Endothelial cell of umbilical vein (primary cell): ENCODE measurements at regions of chr1 and their contacts with region 1.

Region 1: DNA sequence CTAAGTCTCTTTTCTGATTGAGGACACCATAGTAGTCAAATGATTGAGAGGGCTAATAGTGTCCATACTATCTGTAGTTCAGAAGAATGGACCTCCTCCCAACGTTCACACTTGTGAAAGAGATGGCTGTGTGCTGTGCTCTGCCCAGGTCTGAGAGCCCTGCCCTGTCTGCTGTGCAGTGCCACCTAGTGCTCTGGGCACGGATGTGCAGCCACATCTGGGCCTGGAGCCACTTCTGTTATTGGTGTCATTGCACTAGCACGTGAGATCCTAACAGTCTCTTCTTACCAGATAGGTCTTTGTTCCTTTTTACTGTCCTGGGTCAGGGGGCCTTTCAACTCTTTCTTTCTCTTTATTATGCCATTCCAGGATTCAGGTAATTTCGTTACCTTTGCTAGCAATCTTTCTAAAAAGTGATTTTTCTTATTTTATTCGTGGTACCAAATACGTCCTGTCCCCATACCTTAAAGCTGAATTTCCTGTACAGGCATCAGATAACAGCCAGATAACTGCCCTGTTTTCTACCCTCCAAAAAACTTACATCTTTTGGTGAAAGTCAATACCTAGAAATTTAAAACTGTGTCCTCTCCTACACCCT is 21.7 kb downstream of the INTS3 start:
- DNase-seq: peak; percentile 88
- H3K4me3 ChIP-seq: no peak overlapping the region
- H3K27ac ChIP-seq: peak overlapping the region; percentile 36
- H3K4me1 ChIP-seq: peaks cover 37% of the 10 kb centered on the region
- H3K27me3 ChIP-seq: no peaks in the 10 kb centered on the region
- CTCF ChIP-seq: peak; percentile 94 to 96
- POLR2A ChIP-seq: no peak

Region 2: GRCh38 chr1:153670859-153671627 is 78.5 kb before region 1 on chr1 and contains the start of gene ILF2:
- CTCF ChIA-PET with region 1: interaction called, 12 read pairs
- POLR2A ChIA-PET with region 1: no interaction called
- dilution Hi-C with region 1: no loop called
- intact Hi-C with region 1: no loop called
- DNase-seq: peak; percentile 100
- H3K4me3 ChIP-seq: peak within 1 kb of the TSS; percentile 69 to 98 (median 92)
- H3K27ac ChIP-seq: peak within 1 kb of the TSS; percentile 85
- H3K4me1 ChIP-seq: peaks cover 11% of the 10 kb centered on the region
- H3K27me3 ChIP-seq: no peaks in the 10 kb centered on the region
- CTCF ChIP-seq: no peak
- POLR2A ChIP-seq: peak; percentile 95
- total RNA-seq, gene ILF2: 271 TPM in 2 replicates

Region 3: GRCh38 chr1:153698020-153698931 is 51.2 kb before region 1 on chr1:
- CTCF ChIA-PET with region 1: interaction called, 20 read pairs
- POLR2A ChIA-PET with region 1: interaction called, 3 read pairs
- dilution Hi-C with region 1: no loop called
- intact Hi-C with region 1: loop called (anchors 1 kb)
- DNase-seq: peak; percentile 96
- H3K4me3 ChIP-seq: no peak overlapping the region
- H3K27ac ChIP-seq: peak overlapping the region; percentile 90
- H3K4me1 ChIP-seq: peaks cover 26% of the 10 kb centered on the region
- H3K27me3 ChIP-seq: no peaks in the 10 kb centered on the region
- CTCF ChIP-seq: no peak
- POLR2A ChIP-seq: no peak

Region 4: DNA sequence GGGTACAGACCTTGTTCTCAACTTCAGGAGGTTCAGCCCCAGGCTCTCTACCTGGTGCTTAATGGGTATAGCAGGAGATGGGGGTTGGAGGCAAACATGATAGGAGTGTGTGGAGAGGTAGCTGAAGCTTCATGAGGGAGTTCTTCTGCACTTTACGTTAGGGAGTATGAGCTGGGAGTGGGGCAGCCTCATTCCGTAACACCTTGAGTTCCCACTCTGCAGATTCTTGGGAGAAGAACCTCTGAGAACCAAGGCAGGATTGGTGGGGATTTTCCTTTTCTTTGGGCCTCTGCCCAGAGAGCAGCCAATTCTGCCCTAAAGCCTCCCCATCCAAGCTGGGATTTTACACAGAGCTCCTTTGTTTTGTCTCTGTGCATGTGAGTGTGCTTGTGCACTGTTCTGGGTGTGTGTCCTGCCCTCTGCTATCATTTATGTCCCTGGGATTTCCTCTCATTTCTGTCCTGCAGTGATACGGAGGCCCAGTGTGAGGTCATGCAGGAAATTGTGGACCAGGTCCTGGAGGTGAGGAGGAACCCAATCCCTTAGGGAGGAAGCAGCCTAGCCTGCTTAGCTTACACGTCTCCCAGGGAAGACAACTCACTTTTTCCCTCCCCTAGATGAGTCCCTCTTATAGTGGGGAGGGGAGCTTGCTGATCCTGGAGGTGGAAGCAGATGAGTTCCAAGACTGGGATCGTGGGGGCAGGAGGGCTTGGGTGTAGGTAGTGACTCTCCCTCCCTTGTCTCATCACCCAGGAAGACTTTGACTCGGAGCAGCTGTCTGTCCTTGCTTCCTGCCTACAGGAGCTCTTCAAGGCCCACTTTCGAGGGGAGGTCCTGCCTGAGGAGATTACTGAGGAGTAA is 14.1 kb after region 1 on chr1:
- CTCF ChIA-PET with region 1: interaction called, 11 read pairs
- POLR2A ChIA-PET with region 1: no interaction called
- dilution Hi-C with region 1: no loop called
- intact Hi-C with region 1: loop called (anchors 1 kb)
- DNase-seq: peak; percentile 87
- H3K4me3 ChIP-seq: no peak overlapping the region
- H3K27ac ChIP-seq: peak overlapping the region; percentile 39
- H3K4me1 ChIP-seq: peaks cover 22% of the 10 kb centered on the region
- H3K27me3 ChIP-seq: no peaks in the 10 kb centered on the region
- CTCF ChIP-seq: no peak
- POLR2A ChIP-seq: peak; percentile 43

Region 5: GRCh38 chr1:153783233-153784190 is 34.0 kb after region 1 on chr1:
- CTCF ChIA-PET with region 1: no interaction called
- POLR2A ChIA-PET with region 1: interaction called, 7 read pairs
- dilution Hi-C with region 1: no loop called
- intact Hi-C with region 1: loop called (anchors 1 kb)
- DNase-seq: peak; percentile 94
- H3K4me3 ChIP-seq: peak overlapping the region; percentile 47 to 62 (median 55)
- H3K27ac ChIP-seq: peak overlapping the region; percentile 73
- H3K4me1 ChIP-seq: peaks cover 15% of the 10 kb centered on the region
- H3K27me3 ChIP-seq: peaks cover 0 to 2% of the 10 kb centered on the region in 2 experiments
- CTCF ChIP-seq: peak in 1 of 2 donors; percentile 12
- POLR2A ChIP-seq: peak; percentile 92

Region 6: DNA sequence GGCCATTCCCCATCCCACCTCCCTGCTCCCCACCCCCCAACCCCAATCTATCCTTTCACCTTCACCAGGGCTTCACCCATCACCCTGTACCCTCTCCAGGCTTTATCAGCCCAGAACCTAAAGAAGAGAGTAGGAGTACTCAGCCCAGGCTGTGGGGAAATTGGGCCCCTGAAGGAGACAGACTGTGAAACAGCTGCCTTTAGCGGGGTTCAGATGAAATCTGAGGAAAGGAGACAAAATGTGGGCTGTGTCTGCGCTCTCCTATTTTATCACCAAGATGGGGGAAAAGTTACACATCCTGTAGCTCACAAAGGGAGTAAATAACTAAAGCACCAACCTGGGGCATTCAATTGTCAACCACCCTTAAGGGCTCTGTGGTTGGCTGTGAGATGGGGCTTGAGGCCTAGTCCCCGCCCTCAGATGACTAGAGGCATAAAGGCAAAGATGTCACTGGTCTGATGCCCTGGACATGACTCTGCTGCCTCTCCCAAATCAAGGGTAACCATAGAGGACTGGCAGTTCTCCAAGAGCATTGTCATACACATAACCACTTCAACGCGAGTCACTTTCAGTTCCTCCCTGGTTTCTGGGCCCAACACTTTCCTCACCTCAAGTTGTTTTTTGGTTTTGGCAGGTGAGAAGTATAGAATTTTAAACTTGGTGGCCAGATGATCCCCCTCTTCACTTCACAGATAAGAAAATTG is 55.7 kb after region 1 on chr1:
- CTCF ChIA-PET with region 1: no interaction called
- POLR2A ChIA-PET with region 1: no interaction called
- dilution Hi-C with region 1: no loop called
- intact Hi-C with region 1: no loop called
- DNase-seq: peak; percentile 19
- H3K4me3 ChIP-seq: no peak overlapping the region
- H3K27ac ChIP-seq: no peak overlapping the region
- H3K4me1 ChIP-seq: peaks cover 4% of the 10 kb centered on the region
- H3K27me3 ChIP-seq: no peaks in the 10 kb centered on the region
- CTCF ChIP-seq: no peak
- POLR2A ChIP-seq: no peak